ENCODE measurements at regions of chr2 and their contacts with region 1.

Region 1: GRCh38 chr2:111157798-111158197 is 37.1 kb downstream of the BCL2L11 start:
- DNase-seq: no peak

Region 2: GRCh38 chr2:111143107-111143842 is 14.5 kb before region 1 on chr2:
- intact Hi-C with region 1: loop called in 1 of 2 experiments (anchors 2 kb)
- DNase-seq: no peak

Region 3: GRCh38 chr2:111168528-111169239 is 10.9 kb after region 1 on chr2:
- intact Hi-C with region 1: no loop called
- DNase-seq: no peak

Measured in posterior vena cava (tissue), 2 donors.